CD4-positive, alpha-beta T cell (primary cell): ENCODE measurements at regions of chr19 and their contacts with region 1.

Region 1: GRCh38 chr19:18013210-18014111 is 5.5 kb downstream of the ARRDC2 start:
- DNase-seq: peak in 4 of 14 experiments; percentile 27 to 60 (median 52)
- ATAC-seq: peak; percentile 22
- H3K4me3 ChIP-seq: no peak overlapping the region
- H3K4me3 Mint-ChIP-seq: peak overlapping the region; percentile 81
- H3K27ac ChIP-seq: peak overlapping the region; percentile 74 to 78
- H3K27ac Mint-ChIP-seq: peak overlapping the region; percentile 97
- H3K4me1 ChIP-seq: peaks cover 79% of the 10 kb centered on the region
- H3K4me1 Mint-ChIP-seq: peaks cover 67% of the 10 kb centered on the region
- H3K27me3 ChIP-seq: no peaks in the 10 kb centered on the region
- H3K27me3 Mint-ChIP-seq: no peaks in the 10 kb centered on the region
- CTCF ChIP-seq: no peak

Region 2: GRCh38 chr19:17977021-17977420 is 36.4 kb before region 1 on chr19:
- CTCF ChIA-PET with region 1: no interaction called
- POLR2A ChIA-PET with region 1: no interaction called
- intact Hi-C with region 1: no loop called
- DNase-seq: no peak
- ATAC-seq: no peak
- H3K4me3 ChIP-seq: no peak overlapping the region
- H3K4me3 Mint-ChIP-seq: no peak overlapping the region
- H3K27ac ChIP-seq: no peak overlapping the region
- H3K27ac Mint-ChIP-seq: no peak overlapping the region
- H3K4me1 ChIP-seq: no peaks in the 10 kb centered on the region
- H3K4me1 Mint-ChIP-seq: no peaks in the 10 kb centered on the region
- H3K27me3 ChIP-seq: peaks cover 0 to 3% of the 10 kb centered on the region in 2 experiments
- H3K27me3 Mint-ChIP-seq: peaks cover 16% of the 10 kb centered on the region
- CTCF ChIP-seq: no peak

Region 3: GRCh38 chr19:18023622-18024251 is 10.3 kb after region 1 on chr19:
- CTCF ChIA-PET with region 1: interaction called, 13 read pairs
- POLR2A ChIA-PET with region 1: interaction called, 31 read pairs
- intact Hi-C with region 1: loop called in 1 of 2 experiments (anchors 1 kb)
- DNase-seq: peak; percentile 49 to 95 (median 79)
- ATAC-seq: peak; percentile 84
- H3K4me3 ChIP-seq: no peak overlapping the region
- H3K4me3 Mint-ChIP-seq: peak overlapping the region; percentile 79
- H3K27ac ChIP-seq: peak overlapping the region; percentile 85 to 87
- H3K27ac Mint-ChIP-seq: peak overlapping the region; percentile 94
- H3K4me1 ChIP-seq: peaks cover 56% of the 10 kb centered on the region
- H3K4me1 Mint-ChIP-seq: peaks cover 57% of the 10 kb centered on the region
- H3K27me3 ChIP-seq: no peaks in the 10 kb centered on the region
- H3K27me3 Mint-ChIP-seq: no peaks in the 10 kb centered on the region
- CTCF ChIP-seq: no peak